ENCODE measurements at regions of chr17 and their contacts with region 1.

Region 1: GRCh38 chr17:59753522-59754467 is 46.3 kb downstream of the VMP1 start:
- DNase-seq: peak; percentile 61
- ATAC-seq: peak; percentile 83
- H3K4me3 Mint-ChIP-seq: peak overlapping the region; percentile 48
- H3K27ac Mint-ChIP-seq: peak overlapping the region; percentile 78
- H3K4me1 Mint-ChIP-seq: peaks cover 48% of the 10 kb centered on the region
- H3K27me3 Mint-ChIP-seq: no peaks in the 10 kb centered on the region

Region 2: GRCh38 chr17:59688008-59688407 is 65.8 kb before region 1 on chr17:
- CTCF ChIA-PET with region 1: no interaction called
- POLR2A ChIA-PET with region 1: no interaction called
- DNase-seq: no peak
- ATAC-seq: no peak
- H3K4me3 Mint-ChIP-seq: no peak overlapping the region
- H3K27ac Mint-ChIP-seq: no peak overlapping the region
- H3K4me1 Mint-ChIP-seq: no peaks in the 10 kb centered on the region
- H3K27me3 Mint-ChIP-seq: no peaks in the 10 kb centered on the region

Region 3: DNA sequence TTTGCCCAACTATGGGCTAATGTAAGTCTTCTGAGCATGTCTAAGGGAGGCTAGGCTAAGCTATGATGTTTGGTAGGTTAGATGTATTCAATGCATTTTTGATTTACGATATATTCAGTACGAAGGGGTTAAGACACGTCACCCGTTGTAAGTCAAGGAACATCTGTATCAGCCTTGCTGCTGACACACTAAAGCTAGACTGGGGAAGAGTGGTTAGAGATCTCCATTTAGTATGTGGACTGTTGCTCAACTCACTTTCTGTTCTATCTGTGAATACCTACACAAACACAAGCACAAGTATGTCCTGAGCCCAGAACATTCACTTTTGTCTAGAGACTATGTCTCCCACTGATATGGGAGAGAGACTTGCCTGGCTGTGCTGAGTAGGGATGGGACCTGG is 25.2 kb after region 1 on chr17:
- CTCF ChIA-PET with region 1: interaction called, 37 read pairs
- POLR2A ChIA-PET with region 1: interaction called, 6 read pairs
- DNase-seq: no peak
- ATAC-seq: no peak
- H3K4me3 Mint-ChIP-seq: no peak overlapping the region
- H3K27ac Mint-ChIP-seq: no peak overlapping the region
- H3K4me1 Mint-ChIP-seq: peaks cover 41% of the 10 kb centered on the region
- H3K27me3 Mint-ChIP-seq: no peaks in the 10 kb centered on the region

Region 4: DNA sequence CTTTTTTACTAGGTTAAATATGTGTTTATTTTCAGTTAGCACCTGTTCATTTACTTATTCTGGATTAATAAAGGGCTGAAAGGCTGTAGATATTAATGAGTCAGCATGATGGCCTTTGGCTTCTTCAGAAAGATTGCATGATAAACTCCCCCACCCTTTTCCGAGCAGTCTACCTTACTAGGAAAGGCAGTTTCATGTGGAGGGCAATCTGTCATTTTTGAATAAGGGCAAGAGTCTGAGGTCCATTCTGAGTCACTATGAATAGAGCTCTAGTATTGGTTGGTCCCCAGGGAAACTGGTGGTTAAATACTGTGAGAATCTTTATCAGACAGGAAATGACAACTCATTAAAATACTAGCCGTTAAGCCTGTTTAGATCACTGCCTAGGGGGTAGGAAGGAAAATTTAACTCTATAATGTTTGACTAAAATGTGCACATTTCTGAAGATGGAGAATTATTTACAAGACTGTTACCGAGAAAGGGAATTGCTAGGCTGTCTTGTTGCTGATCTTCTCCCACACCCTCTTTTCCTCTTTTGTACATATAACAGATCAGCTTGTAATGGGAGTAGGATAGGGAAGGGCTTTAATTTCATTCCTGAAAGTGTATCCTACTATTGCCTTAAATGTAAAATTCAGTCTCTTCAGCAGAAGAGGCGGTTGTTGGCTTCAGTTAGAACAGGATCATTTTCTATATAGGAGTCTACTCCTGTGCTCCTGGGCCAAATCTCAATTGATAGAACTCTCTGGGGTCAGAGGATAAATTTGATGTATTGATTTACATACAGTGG is 75.6 kb after region 1 on chr17:
- CTCF ChIA-PET with region 1: interaction called, 102 read pairs
- POLR2A ChIA-PET with region 1: interaction called, 34 read pairs
- DNase-seq: peak; percentile 72
- ATAC-seq: peak; percentile 81
- H3K4me3 Mint-ChIP-seq: peak overlapping the region; percentile 72
- H3K27ac Mint-ChIP-seq: peak overlapping the region; percentile 96
- H3K4me1 Mint-ChIP-seq: peaks cover 83% of the 10 kb centered on the region
- H3K27me3 Mint-ChIP-seq: no peaks in the 10 kb centered on the region

Region 5: DNA sequence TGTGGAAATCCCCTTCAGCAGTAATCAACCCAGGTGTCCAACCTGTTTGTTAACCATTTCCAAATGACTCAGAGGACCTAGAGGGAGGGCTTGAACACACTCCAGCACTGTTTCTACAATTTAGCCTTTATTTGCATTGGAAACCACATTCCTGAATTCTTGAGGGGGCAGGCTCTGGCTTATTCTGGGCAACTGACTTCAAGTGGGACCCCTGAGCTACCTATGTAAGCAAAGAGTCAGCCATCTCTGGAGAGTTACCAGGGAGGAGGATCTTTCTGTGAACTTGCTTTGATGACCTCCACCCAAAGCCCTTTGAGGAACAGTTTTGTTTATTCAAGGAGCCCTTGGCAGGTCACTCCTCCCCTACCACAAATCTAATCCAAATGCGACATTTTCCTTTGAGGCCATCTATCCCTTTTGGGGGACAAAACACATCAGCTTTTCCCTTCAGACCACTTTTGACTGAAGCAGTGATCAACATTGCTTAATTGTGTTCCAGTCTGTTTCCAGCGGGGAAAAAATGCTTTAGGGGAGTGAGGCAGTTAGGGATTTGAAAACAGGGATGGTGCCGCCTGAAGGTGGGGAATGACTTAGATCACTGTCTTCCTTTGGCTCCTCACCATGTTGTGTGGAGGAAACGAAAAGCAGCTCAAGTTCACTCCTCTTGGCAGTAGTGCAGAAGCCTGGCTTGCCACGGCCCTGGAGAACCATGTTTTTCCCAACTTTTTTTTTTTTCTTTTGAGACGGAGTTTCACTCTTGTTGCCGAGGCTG is 92.8 kb after region 1 on chr17:
- CTCF ChIA-PET with region 1: interaction called, 82 read pairs
- POLR2A ChIA-PET with region 1: interaction called, 178 read pairs
- DNase-seq: no peak
- ATAC-seq: peak; percentile 55
- H3K4me3 Mint-ChIP-seq: no peak overlapping the region
- H3K27ac Mint-ChIP-seq: peak overlapping the region; percentile 44
- H3K4me1 Mint-ChIP-seq: peaks cover 71% of the 10 kb centered on the region
- H3K27me3 Mint-ChIP-seq: no peaks in the 10 kb centered on the region

Region 6: DNA sequence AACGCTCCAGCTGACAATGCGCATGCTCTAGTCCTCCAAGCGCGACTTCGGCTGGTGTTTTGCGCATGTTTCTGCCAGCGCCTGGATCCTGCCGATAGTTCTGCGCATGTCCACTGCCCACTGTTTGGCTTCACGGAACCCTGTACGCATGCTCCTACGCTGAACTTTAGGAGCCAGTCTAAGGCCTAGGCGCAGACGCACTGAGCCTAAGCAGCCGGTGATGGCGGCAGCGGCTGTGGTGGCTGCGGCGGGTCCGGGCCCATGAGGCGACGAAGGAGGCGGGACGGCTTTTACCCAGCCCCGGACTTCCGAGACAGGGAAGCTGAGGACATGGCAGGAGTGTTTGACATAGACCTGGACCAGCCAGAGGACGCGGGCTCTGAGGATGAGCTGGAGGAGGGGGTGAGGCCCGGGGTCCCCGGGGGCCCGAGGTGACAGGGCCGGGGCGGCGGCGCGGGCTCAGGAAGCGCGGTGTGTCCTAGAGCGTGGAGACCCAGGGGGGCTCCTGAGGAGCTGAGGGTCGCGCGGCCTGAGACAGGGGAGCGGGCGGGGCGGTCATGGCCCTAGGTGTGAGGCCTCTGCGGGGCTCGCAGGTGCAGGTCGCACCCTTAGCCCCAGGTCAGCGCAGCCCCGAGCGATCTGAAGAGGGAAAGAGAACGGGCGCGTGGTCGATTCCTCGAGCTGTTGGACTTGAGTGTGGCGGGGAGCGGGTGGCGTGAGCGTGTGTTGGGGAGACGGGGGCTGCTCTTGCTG is 139.3 kb after region 1 on chr17 and contains the starts of genes RPS6KB1 and TUBD1:
- CTCF ChIA-PET with region 1: interaction called, 21 read pairs
- POLR2A ChIA-PET with region 1: interaction called, 5 read pairs
- DNase-seq: peak; percentile 99
- ATAC-seq: peak; percentile 96
- H3K4me3 Mint-ChIP-seq: peak within 1 kb of the TSS; percentile 100
- H3K27ac Mint-ChIP-seq: peak within 1 kb of the TSS; percentile 99
- H3K4me1 Mint-ChIP-seq: peaks cover 49% of the 10 kb centered on the region
- H3K27me3 Mint-ChIP-seq: no peaks in the 10 kb centered on the region
- total RNA-seq, gene RPS6KB1: 47.5 to 48.7 TPM
- total RNA-seq, gene TUBD1: 14.5 to 14.7 TPM